CD4-positive, alpha-beta memory T cell (primary cell): ENCODE measurements at regions of chr14 and their contacts with region 1.

Region 1: GRCh38 chr14:35159742-35160409 is 37.5 kb downstream of the PRORP start:
- DNase-seq: no peak
- H3K4me3 ChIP-seq: no peak overlapping the region
- H3K4me3 Mint-ChIP-seq: peak overlapping the region in 5 of 8 donors; percentile 3 to 71 (median 45)
- H3K27ac ChIP-seq: no peak overlapping the region
- H3K27ac Mint-ChIP-seq: peak overlapping the region in 6 of 7 donors; percentile 52 to 88 (median 72)
- H3K4me1 ChIP-seq: peaks cover 51% of the 10 kb centered on the region
- H3K4me1 Mint-ChIP-seq: peaks cover 42 to 68% (median 53%) of the 10 kb centered on the region in 4 donors
- H3K27me3 ChIP-seq: no peaks in the 10 kb centered on the region
- H3K27me3 Mint-ChIP-seq: no peaks in the 10 kb centered on the region

Region 2: GRCh38 chr14:35201066-35201465 is 41.2 kb after region 1 on chr14:
- CTCF ChIA-PET with region 1: no interaction called
- POLR2A ChIA-PET with region 1: interaction called, 3 read pairs
- intact Hi-C with region 1: loop called (anchors 5 kb)
- DNase-seq: peak in 4 of 5 donors; percentile 22 to 40 (median 28)
- H3K4me3 ChIP-seq: no peak overlapping the region
- H3K4me3 Mint-ChIP-seq: peak overlapping the region in 6 of 8 donors; percentile 29 to 78 (median 61)
- H3K27ac ChIP-seq: peak overlapping the region; percentile 15
- H3K27ac Mint-ChIP-seq: peak overlapping the region; percentile 44 to 89 (median 70)
- H3K4me1 ChIP-seq: peaks cover 63% of the 10 kb centered on the region
- H3K4me1 Mint-ChIP-seq: peaks cover 28 to 57% (median 45%) of the 10 kb centered on the region in 4 donors
- H3K27me3 ChIP-seq: no peaks in the 10 kb centered on the region
- H3K27me3 Mint-ChIP-seq: no peaks in the 10 kb centered on the region

Region 3: DNA sequence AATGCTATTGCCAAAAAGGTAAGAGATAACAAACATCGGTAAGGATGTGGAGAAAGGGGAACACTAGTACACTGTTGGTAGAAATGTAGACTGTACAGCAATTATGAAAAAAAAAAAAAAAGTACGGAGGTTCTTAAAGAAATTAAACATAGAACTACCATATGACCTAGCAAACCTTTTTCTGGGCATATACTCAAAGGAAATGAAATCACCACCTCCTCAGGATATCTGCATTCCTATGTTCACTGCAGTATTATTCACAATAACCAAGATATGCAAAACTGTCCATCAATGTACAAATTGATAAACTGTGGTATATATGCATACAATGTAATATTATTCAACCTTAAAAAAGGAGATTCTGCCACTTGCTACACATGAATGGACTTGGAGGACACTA is 434.7 kb after region 1 on chr14:
- CTCF ChIA-PET with region 1: no interaction called
- POLR2A ChIA-PET with region 1: no interaction called
- intact Hi-C with region 1: no loop called
- DNase-seq: no peak
- H3K4me3 ChIP-seq: no peak overlapping the region
- H3K4me3 Mint-ChIP-seq: no peak overlapping the region
- H3K27ac ChIP-seq: no peak overlapping the region
- H3K27ac Mint-ChIP-seq: no peak overlapping the region
- H3K4me1 ChIP-seq: no peaks in the 10 kb centered on the region
- H3K4me1 Mint-ChIP-seq: peaks cover 0 to 3% (median 0%) of the 10 kb centered on the region in 4 donors
- H3K27me3 ChIP-seq: no peaks in the 10 kb centered on the region
- H3K27me3 Mint-ChIP-seq: no peaks in the 10 kb centered on the region